ENCODE measurements at regions of chr4 and their contacts with region 1.

Region 1: GRCh38 chr4:147371661-147372060 is 109.2 kb upstream of the EDNRA start:
- DNase-seq: no peak
- H3K4me3 ChIP-seq: no peak overlapping the region
- H3K27ac ChIP-seq: peak overlapping the region; percentile 78
- H3K4me1 ChIP-seq: peaks cover 19% of the 10 kb centered on the region
- H3K27me3 ChIP-seq: no peaks in the 10 kb centered on the region
- CTCF ChIP-seq: no peak

Region 2: GRCh38 chr4:147118528-147118927 is 253.1 kb before region 1 on chr4:
- CTCF ChIA-PET with region 1: no interaction called
- POLR2A ChIA-PET with region 1: interaction called, 15 read pairs
- intact Hi-C with region 1: no loop called
- DNase-seq: no peak
- H3K4me3 ChIP-seq: no peak overlapping the region
- H3K27ac ChIP-seq: no peak overlapping the region
- H3K4me1 ChIP-seq: no peaks in the 10 kb centered on the region
- H3K27me3 ChIP-seq: no peaks in the 10 kb centered on the region
- CTCF ChIP-seq: no peak

Region 3: DNA sequence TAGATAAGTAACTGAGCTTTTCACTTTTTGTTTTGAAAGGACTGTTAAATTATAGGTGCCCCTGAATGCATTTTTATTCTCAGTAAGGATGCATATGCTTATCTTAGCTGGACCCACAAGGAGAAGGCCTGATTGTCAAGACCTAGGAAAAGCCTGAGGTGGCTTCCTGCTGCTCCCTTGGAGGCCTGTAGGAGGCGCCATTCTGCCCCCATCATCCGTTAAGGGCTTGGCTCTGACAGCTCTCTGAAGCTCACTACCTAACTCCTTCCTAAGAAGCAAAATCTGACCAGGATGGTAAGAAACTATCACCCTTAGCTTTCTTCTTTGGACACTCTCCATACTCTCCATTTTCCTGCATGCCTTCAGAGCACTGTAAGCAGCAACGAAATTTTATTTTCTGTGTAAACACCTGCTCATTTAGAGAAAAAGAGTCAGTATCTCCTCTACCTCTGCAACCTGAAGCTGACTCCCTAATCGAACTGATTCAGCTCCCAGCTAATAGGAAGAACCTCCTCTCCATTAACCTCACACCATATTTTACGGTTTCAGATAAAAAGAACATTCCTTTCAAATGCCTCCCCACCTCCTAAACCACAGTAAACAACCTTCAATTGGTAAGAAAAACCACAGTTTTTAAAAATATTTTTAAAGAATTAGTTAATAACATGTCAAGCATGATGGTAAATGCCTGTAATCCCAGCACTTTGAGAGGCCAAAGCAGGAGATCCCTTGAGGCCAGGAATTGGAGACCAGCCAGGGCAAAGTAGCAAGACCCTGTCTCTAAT is 35.8 kb after region 1 on chr4:
- CTCF ChIA-PET with region 1: no interaction called
- POLR2A ChIA-PET with region 1: no interaction called
- intact Hi-C with region 1: no loop called
- DNase-seq: no peak
- H3K4me3 ChIP-seq: no peak overlapping the region
- H3K27ac ChIP-seq: no peak overlapping the region
- H3K4me1 ChIP-seq: no peaks in the 10 kb centered on the region
- H3K27me3 ChIP-seq: no peaks in the 10 kb centered on the region
- CTCF ChIP-seq: peak; percentile 43; the same call in 1 of the 2 replicates